ENCODE measurements at regions of chr16 and their contacts with region 1.

Region 1: DNA sequence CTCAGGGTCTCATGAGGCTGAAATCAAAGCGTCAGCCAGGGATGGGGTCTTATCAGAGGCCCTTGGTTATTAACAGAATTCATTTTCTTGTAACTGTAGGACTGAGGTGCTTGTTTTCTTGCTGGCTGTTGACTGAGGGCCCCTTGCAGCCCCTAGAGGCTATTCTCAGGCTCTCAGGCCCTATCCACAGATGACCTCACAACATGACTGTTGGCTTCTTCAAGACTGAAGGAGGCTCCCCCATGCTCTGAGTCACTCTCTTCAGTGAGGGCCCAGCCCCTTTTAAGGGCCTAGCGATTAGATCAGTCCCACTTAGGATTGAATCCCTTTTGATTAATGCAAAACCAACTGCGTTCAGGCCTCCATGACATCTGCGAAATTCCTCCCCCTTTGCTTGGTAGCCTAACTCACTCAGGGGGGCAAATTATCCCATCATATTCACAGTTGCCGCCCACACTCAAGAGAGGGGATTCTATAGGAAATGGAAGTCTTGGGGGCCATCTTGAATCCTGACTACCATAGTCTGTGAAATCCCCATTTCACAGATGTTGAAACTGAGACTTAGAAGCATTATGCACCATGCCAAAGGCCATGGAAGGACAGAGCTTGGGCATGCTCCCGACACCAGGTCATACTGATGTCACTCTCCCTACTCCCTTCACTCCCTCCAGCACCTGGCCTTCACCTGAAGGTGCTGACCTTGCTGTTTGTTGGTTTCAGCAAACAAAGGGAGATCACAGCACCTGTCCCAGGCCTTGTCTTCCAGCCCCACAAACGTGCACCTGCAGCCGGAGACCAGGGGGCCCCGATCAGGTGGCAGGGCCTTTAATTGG is 592.3 kb downstream of the MAF start:
- DNase-seq: peak; percentile 60
- H3K4me3 Mint-ChIP-seq: no peak overlapping the region
- H3K27ac Mint-ChIP-seq: peak overlapping the region; percentile 90
- H3K4me1 Mint-ChIP-seq: peaks cover 45% of the 10 kb centered on the region
- H3K27me3 Mint-ChIP-seq: no peaks in the 10 kb centered on the region

Region 2: GRCh38 chr16:78900044-78900811 is 108.0 kb before region 1 on chr16:
- CTCF ChIA-PET with region 1: no interaction called
- POLR2A ChIA-PET with region 1: interaction called, 4 read pairs
- intact Hi-C with region 1: loop called (anchors 5 kb)
- DNase-seq: no peak
- H3K4me3 Mint-ChIP-seq: peak overlapping the region; percentile 20
- H3K27ac Mint-ChIP-seq: peak overlapping the region; percentile 96
- H3K4me1 Mint-ChIP-seq: peaks cover 76% of the 10 kb centered on the region
- H3K27me3 Mint-ChIP-seq: no peaks in the 10 kb centered on the region

Region 3: GRCh38 chr16:78976212-78976611 is 32.0 kb before region 1 on chr16:
- CTCF ChIA-PET with region 1: no interaction called
- POLR2A ChIA-PET with region 1: interaction called, 5 read pairs
- intact Hi-C with region 1: loop called (anchors 1 kb)
- DNase-seq: peak; percentile 85
- H3K4me3 Mint-ChIP-seq: no peak overlapping the region
- H3K27ac Mint-ChIP-seq: peak overlapping the region; percentile 84
- H3K4me1 Mint-ChIP-seq: peaks cover 32% of the 10 kb centered on the region
- H3K27me3 Mint-ChIP-seq: no peaks in the 10 kb centered on the region

Region 4: DNA sequence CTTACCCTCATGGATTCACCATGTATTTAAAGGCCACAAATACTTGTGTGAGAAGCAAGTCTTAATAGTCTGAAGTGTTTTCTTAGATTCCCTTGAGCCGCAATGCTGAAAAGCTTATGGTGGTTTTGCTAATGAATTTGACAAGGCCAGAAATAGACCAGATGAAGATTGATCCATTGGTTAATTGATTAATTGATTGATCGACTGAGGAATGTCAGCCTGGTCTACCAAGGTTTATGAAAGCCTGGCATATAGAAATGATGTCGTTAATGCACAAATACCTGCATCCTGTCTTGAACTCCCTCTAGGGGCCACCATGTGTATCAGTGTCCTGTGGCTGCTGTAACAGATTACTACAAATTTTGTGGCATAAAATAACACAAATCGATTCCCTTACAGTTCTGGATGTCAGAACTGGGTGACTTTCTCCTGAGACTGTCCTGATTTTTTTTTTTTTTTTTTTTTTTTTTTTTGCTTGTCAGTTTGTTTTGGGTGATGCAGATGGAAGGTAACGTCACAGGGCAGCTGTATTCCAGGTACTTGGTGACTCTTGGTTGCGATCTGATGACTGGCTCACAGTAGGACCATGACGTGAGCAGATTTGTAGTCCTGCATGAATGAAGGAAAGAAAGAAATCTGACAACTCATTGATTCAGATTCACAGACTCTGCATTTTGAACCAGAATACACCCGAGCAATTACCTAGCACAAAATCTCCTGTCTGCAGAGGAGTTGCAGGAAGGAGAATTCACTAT is 39.2 kb after region 1 on chr16:
- CTCF ChIA-PET with region 1: interaction called, 7 read pairs
- POLR2A ChIA-PET with region 1: interaction called, 5 read pairs
- intact Hi-C with region 1: loop called (anchors 2 kb)
- DNase-seq: peak; percentile 32
- H3K4me3 Mint-ChIP-seq: no peak overlapping the region
- H3K27ac Mint-ChIP-seq: peak overlapping the region; percentile 50
- H3K4me1 Mint-ChIP-seq: peaks cover 44% of the 10 kb centered on the region
- H3K27me3 Mint-ChIP-seq: no peaks in the 10 kb centered on the region